Activated T-helper 2 cell treated with anti-CD3 and anti-CD28 coated beads, Interferon-gamma antibody, Interleukin-2, Interleukin-4, amounts not matched to agents 10 μg/mL and 5 μg/mL and 100 μg/mL, durations not matched to agents 14 hours and 24 hours and 36 hours (primary cell): ENCODE measurements at regions of chr5 and their contacts with region 1.

Region 1: GRCh38 chr5:82351754-82352145 is 73.6 kb upstream of the RPS23 start:
- DNase-seq: no peak
- H3K4me3 Mint-ChIP-seq: no peak overlapping the region
- H3K27ac Mint-ChIP-seq: no peak overlapping the region
- H3K4me1 Mint-ChIP-seq: peaks cover 35% of the 10 kb centered on the region
- H3K27me3 Mint-ChIP-seq: no peaks in the 10 kb centered on the region

Region 2: DNA sequence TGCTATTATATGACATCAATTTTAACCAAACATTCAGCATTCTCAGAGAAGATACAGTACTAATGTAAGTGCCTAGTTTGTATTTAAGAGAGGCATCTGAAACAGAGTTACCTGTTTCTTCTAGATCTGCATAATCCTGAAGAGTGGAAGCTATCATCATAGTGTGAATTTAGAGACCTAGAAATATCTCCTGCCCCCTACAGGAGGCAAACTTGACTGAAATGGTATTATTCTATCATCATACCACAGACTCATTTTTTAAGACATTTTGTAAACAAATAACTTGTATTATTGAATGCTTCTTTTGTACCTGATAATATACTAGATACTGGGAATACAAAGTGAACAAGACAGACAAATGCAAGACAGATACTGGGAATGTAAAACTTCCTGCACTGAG is 143.2 kb after region 1 on chr5:
- intact Hi-C with region 1: loop called (anchors 10 kb)
- DNase-seq: no peak
- H3K4me3 Mint-ChIP-seq: no peak overlapping the region
- H3K27ac Mint-ChIP-seq: no peak overlapping the region
- H3K4me1 Mint-ChIP-seq: peaks cover 4% of the 10 kb centered on the region
- H3K27me3 Mint-ChIP-seq: peaks cover 1% of the 10 kb centered on the region

Region 3: GRCh38 chr5:82793808-82794419 is 442.2 kb after region 1 on chr5:
- intact Hi-C with region 1: loop called (anchors 2 kb)
- DNase-seq: no peak
- H3K4me3 Mint-ChIP-seq: no peak overlapping the region
- H3K27ac Mint-ChIP-seq: no peak overlapping the region
- H3K4me1 Mint-ChIP-seq: no peaks in the 10 kb centered on the region
- H3K27me3 Mint-ChIP-seq: peaks cover 5% of the 10 kb centered on the region

Region 4: GRCh38 chr5:83430130-83431010 is 1078.6 kb after region 1 on chr5:
- intact Hi-C with region 1: loop called (anchors 2 kb)
- DNase-seq: peak; percentile 26
- H3K4me3 Mint-ChIP-seq: no peak overlapping the region
- H3K27ac Mint-ChIP-seq: no peak overlapping the region
- H3K4me1 Mint-ChIP-seq: no peaks in the 10 kb centered on the region
- H3K27me3 Mint-ChIP-seq: no peaks in the 10 kb centered on the region

Region 5: DNA sequence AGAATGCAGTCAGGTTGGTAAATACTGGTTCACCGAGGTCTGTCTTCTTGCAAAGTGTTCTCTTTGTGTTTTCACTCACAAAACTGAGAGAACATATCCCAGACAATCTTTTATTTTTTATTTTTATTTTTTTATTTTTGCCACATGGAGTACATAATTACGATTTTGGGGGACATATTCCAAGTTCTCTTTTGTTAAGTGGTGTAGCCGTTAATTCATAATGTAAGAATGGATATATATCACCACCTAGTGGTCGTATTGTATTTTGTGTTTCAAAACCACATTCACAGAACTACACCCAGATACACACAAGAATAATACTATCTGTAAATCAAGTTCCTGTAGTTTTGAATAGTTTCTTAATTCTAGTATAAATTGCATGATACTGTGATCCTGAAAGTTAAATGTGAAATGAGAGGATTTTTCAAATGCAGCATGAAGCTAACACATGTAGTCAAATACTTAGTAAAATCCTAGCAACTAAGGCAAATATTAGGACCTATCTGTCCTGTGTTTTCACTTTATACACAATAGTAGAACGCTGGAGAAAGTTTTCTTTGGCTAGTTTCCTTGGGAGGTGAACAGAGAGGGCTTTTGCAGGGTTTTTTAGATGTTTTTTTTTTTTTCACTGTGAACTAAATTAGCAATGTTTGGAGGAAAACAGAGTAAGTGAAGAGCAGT is 1212.5 kb after region 1 on chr5:
- intact Hi-C with region 1: loop called (anchors 5 kb)
- DNase-seq: no peak
- H3K4me3 Mint-ChIP-seq: no peak overlapping the region
- H3K27ac Mint-ChIP-seq: no peak overlapping the region
- H3K4me1 Mint-ChIP-seq: peaks cover 3% of the 10 kb centered on the region
- H3K27me3 Mint-ChIP-seq: peaks cover 18% of the 10 kb centered on the region